ENCODE measurements at regions of chr17 and their contacts with region 1.

Region 1: DNA sequence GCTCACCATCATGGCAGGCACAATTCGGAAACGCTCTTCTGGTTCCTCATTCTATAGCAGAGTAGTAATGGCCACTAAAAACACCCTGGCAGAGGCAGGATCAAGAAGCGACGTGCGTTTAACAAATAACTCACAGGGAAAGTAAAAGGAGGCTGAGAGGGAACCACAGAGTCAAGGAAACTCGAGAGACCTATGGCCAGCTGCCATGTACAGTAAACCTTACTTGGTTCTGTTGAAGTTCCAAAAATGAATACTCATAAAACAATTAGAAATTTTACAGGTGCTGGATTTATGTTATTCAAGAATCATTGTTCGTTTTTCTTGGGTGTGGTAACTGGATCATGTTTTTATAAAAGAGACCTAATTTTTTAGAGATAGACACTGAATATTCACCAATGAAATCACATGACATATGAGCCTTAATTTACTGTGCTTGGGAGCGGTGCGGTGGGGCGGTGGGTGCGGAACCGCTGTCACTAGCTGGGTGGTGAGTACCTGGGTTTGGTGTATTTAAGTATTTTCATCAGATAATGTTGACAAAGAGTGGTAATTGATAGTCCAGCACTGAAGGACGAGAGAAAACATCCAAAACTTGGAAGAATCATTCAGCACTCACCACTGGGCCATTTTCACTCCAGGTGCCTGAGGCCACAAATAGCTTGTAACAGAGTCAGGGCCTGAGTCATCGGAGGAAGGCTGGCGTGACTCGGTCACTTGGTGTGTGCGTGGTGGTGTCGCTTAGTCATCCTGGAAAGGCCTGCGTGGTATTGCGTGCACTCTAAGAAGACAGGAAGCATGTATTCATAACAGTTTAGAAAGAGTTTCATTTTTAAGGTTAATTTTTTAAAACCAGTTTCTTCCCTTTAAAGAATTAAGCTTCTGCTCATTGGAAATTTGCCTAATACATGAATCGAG is 135.4 kb upstream of the CHMP6 start:
- DNase-seq: peak; percentile 85
- H3K4me3 Mint-ChIP-seq: peak overlapping the region; percentile 61
- H3K27ac Mint-ChIP-seq: peak overlapping the region; percentile 96
- H3K4me1 Mint-ChIP-seq: peaks cover 80% of the 10 kb centered on the region
- H3K27me3 Mint-ChIP-seq: no peaks in the 10 kb centered on the region

Region 2: DNA sequence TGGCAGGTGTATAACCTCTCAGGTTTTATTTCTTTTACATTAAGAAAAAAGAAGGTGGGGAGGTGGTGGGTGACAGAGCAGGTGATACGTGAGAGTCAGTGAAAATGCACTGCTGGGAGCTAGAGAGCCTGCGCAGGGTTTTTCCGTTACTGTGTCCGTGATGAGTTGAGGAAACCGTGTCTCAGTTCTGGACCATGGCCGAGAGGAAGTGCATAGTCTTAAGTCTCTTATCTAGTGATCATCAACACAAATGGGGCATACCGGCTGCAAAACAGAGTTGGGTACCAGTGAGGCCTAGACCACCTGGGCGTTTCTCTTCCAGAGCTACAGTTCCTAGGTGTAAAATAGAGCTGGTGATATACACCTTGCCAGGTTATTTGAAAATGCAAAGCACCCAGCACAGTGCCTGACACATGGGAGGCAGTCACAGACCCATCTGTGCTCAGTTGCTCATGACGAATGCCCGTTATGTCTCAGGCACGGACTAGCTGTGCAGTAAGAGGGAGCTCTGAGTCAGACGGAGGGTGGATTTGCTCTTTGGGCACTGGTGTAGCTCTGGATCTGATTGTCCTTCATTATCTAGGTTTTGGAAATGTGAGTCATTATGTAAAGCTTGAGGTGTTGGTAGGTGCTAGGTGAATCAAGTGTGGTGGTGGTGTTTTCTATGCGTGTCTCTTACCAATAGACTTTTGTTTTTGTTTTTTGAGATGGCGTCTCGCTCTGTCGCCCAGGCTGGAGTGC is 250.7 kb before region 1 on chr17:
- intact Hi-C with region 1: loop called (anchors 2 kb)
- DNase-seq: peak; percentile 31
- H3K4me3 Mint-ChIP-seq: no peak overlapping the region
- H3K27ac Mint-ChIP-seq: peak overlapping the region; percentile 35
- H3K4me1 Mint-ChIP-seq: peaks cover 66% of the 10 kb centered on the region
- H3K27me3 Mint-ChIP-seq: peaks cover 2% of the 10 kb centered on the region

Region 3: DNA sequence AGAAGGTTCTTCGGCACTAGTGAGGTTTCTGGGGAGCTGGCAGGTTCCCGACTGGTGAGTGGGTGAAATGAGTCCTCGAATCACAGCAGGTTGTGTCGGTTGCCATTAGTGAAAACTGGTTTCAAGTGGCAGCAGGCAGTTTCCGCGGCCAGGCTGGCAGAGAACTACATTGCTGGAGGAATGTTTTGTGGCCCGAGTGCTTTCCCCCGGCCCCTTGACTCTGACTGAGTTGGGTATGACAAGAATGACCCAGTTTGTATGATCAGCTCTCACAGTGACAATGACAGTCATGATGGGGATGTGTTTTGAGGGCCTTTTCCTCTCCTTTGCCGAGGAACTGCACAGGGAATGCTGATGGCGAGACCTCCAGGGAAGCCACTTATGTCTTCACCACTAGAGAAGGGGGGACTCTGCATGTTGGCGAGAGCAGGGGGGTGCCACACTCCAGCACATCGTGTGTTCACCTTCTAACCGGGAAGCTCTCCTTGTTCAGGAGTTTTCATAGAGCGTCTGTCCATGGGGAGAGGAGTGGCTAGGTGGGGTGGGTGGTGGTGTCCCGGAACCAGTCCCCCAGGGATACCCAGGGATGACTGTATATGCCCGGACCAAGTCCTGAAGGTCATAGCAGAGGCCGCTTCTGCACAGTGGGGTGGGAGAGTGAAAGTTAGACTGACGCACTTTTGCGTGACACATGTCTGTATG is 70.6 kb before region 1 on chr17:
- intact Hi-C with region 1: loop called (anchors 2 kb)
- DNase-seq: peak; percentile 21
- H3K4me3 Mint-ChIP-seq: peak overlapping the region; percentile 61
- H3K27ac Mint-ChIP-seq: peak overlapping the region; percentile 97
- H3K4me1 Mint-ChIP-seq: peaks cover 87% of the 10 kb centered on the region
- H3K27me3 Mint-ChIP-seq: no peaks in the 10 kb centered on the region

Region 4: GRCh38 chr17:80817321-80818251 is 38.6 kb before region 1 on chr17:
- intact Hi-C with region 1: no loop called
- DNase-seq: no peak
- H3K4me3 Mint-ChIP-seq: no peak overlapping the region
- H3K27ac Mint-ChIP-seq: peak overlapping the region; percentile 35
- H3K4me1 Mint-ChIP-seq: peaks cover 85% of the 10 kb centered on the region
- H3K27me3 Mint-ChIP-seq: no peaks in the 10 kb centered on the region

Region 5: GRCh38 chr17:80876950-80877728 is 20.9 kb after region 1 on chr17:
- intact Hi-C with region 1: loop called (anchors 1 kb)
- DNase-seq: peak; percentile 64
- H3K4me3 Mint-ChIP-seq: peak overlapping the region; percentile 65
- H3K27ac Mint-ChIP-seq: peak overlapping the region; percentile 96
- H3K4me1 Mint-ChIP-seq: peaks cover 55% of the 10 kb centered on the region
- H3K27me3 Mint-ChIP-seq: no peaks in the 10 kb centered on the region

Measured in activated T-helper 1 cell treated with anti-CD3 and anti-CD28 coated beads, Interleukin-12 subunit alpha, Interleukin-12 subunit beta, Interleukin-2, Interleukin-4 antibody, amounts not matched to agents 30 ng/mL and 10 ng/mL and 1 ng/mL, durations not matched to agents 14 hours and 24 hours and 36 hours (primary cell).